Spleen (tissue), 13 donors: ENCODE measurements at regions of chr5 and their contacts with region 1.

Region 1: DNA sequence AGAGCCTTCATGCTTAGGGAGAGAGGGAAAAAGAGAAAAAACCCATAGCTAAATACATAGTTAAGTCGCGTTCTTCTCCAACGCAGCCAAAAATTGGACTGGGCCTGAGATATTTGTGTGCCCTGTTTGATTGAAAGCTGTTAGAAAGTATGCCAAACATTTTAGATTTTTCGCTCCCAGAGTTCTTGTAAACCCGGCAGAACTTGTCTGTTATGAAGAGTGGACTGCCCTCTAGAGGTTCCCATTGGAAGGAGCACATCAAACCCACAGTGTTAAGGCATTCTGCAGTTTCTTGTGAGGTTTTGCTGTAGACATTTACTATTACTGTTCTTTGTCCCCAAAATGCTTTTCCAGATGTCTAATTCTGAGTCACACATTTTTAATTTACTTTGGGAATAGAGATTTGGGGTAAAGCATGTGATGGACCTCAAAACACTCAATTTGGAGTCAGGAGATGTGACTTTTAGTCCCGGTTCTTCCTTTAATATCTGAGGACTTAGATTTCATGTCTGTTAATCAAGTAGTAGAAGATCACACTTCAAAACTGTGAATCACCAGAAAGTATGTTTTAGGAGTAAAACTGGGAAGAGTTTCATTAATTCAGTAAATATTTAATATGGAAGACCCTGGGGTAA is 96.6 kb downstream of the PCSK1 start:
- DNase-seq: no peak
- H3K4me3 ChIP-seq: no peak overlapping the region
- H3K27ac ChIP-seq: no peak overlapping the region
- H3K4me1 ChIP-seq: peaks cover 0 to 27% (median 6%) of the 10 kb centered on the region in 6 donors
- H3K27me3 ChIP-seq: no peaks in the 10 kb centered on the region
- CTCF ChIP-seq: peak; percentile 62 to 94 (median 84)
- POLR2A ChIP-seq: no peak

Region 2: DNA sequence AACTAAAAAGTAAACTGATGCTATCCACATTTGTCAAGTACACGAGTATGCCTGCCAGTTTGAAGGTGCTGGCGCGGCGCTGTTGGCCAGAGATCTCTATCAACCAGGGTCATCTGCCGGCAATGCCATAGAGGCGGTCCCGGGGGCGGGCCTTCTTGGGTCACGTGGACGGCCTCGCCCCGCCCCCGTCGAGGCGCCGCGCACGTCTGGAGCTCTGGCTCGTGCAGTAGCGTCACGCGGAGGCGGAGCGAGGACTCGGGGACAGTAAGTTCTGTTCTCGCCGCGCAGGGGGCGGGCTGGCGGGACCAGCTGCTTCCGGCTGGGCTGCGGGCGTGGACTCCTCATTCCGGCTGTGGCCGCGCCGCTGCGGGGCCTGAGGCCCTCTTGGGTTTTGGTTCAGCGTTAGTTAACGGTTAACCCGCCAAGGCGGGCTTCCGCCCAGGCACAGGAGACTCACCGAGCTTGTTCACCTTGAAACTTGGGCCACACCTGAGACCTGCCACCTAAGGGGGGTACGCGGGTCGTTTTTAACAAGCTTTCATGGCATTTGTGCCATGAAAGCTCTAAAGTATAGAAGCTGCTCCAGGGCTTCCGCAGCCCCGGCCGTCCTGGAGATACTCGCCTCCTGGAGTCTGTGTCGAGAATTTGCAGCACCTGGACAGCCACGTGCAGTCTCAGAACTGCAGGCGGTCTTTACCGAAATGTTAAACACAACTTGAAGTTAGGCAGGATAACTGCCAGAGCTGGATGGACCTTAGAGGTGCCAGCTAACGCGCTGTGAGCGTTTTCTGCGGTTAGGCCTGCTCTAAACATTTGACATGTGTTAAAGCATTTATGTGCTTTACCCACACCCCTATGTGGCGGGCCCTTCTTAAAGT is 689.7 kb before region 1 on chr5 and contains the start of gene RFESD:
- intact Hi-C with region 1: loop called (anchors 10 kb)
- DNase-seq: peak; percentile 100
- H3K4me3 ChIP-seq: peak within 1 kb of the TSS; percentile 39 to 67 (median 50)
- H3K27ac ChIP-seq: peak within 1 kb of the TSS; percentile 89 to 95 (median 94)
- H3K4me1 ChIP-seq: peaks cover 11 to 42% (median 24%) of the 10 kb centered on the region in 6 donors
- H3K27me3 ChIP-seq: no peaks in the 10 kb centered on the region
- CTCF ChIP-seq: peak in 5 of 11 experiments; percentile 29 to 58 (median 41)
- POLR2A ChIP-seq: peak; percentile 33 to 93 (median 80)
- total RNA-seq, gene RFESD: 2.2 to 6.5 (median 3.6) TPM

Region 3: DNA sequence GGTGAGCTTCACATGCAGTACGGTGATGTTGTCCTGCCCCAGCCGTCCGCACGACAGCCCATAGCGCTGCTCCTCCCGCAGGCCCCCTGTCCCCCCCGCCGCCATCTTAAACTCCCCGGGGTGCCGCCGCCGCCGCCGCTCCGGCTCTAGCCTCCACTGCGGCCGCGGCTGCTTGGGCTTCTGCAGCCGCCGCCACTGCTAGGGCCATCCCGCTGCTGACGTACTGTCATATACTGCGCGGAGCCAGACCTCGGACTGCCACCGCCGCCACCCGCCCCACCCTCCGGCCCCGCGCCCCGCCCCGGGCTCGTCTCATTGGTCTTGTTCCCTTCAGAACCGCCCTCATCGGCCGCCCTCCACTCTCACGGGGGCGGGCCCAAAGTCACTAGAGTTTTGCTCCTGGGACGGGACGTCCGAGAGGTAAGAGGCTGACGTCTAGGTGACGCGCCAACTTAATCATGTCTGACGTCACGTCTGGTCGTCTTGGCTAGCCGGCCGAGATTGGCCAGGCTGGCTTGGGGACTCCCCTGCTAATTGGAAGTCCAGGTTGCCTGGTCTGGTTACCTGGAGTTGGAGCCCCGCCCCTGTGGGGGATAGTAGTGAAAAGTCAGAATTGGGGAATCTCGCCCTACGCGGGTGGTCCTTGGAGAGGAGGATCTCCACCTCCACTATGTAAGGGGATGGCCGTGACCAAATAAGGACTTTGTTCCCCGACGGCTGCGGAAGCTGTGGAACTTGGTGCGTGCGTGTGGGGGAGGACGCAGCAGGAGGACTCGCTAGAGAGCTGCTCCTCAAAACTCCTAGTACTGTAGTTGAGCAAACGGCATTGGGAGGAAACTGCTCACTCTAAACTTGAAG is 374.6 kb before region 1 on chr5 and contains the start of gene ELL2:
- intact Hi-C with region 1: loop called (anchors 10 kb)
- DNase-seq: peak; percentile 99
- H3K4me3 ChIP-seq: peak within 1 kb of the TSS; percentile 60 to 85 (median 66)
- H3K27ac ChIP-seq: peak within 1 kb of the TSS; percentile 97 to 100 (median 99)
- H3K4me1 ChIP-seq: peaks cover 8 to 48% (median 35%) of the 10 kb centered on the region in 6 donors
- H3K27me3 ChIP-seq: no peaks in the 10 kb centered on the region
- CTCF ChIP-seq: no peak
- POLR2A ChIP-seq: peak; percentile 49 to 95 (median 69)
- total RNA-seq, gene ELL2: 42.3 to 109 (median 83.0) TPM

Region 4: GRCh38 chr5:96934708-96935558 is 598.5 kb after region 1 on chr5:
- intact Hi-C with region 1: no loop called
- DNase-seq: peak; percentile 99
- H3K4me3 ChIP-seq: peak overlapping the region; percentile 55 to 91 (median 82)
- H3K27ac ChIP-seq: peak overlapping the region; percentile 94 to 99 (median 98)
- H3K4me1 ChIP-seq: peaks cover 42 to 79% (median 64%) of the 10 kb centered on the region in 6 donors
- H3K27me3 ChIP-seq: no peaks in the 10 kb centered on the region
- CTCF ChIP-seq: peak in 9 of 11 experiments; percentile 12 to 59 (median 38)
- POLR2A ChIP-seq: peak; percentile 36 to 76 (median 56)